GM12878 (cell line): ENCODE measurements at regions of chrX and their contacts with region 1.

Region 1: DNA sequence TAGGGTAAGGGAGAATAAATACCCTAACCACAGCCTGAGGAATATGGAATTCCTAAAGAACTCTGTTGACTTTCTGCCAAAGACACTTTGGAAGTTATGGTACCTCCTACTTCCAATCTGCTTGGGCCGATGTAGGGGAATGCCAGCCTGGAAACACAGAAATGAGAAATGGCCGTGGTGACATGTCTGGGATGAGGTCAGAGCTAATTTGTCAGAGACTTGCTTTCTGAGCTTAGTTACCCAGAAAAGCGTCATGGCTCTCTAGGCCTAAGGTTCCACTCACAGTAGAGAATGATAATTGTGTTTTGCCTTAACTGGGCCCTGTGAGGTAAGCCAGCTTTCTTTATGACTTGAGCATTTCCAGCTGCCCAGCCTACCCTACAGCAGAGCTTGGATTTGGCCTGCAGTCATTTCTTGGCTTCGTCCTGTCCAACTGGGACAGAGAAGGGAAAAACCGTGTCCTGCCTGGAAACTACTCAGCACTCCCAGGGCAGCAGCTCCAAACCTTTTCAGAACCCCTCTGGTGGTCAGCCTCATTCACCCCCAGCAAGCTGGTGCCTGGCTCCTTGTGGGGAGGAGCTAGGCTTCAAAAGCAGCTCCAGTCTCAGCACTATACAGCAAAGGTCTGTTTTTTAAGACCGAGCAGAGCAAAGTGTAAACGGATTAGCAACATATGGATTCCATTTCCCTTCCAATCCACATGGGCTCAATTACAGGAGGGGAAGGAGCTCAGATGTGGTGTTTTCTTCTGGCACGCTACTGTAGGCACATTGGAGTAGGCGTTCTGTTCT is 92.3 kb downstream of the RLIM start:
- DNase-seq: no peak
- ATAC-seq: no peak
- H3K4me3 ChIP-seq: no peak overlapping the region
- H3K27ac ChIP-seq: no peak overlapping the region
- H3K4me1 ChIP-seq: no peaks in the 10 kb centered on the region
- H3K27me3 ChIP-seq: no peaks in the 10 kb centered on the region
- CTCF ChIP-seq: no peak
- EP300 ChIP-seq: no peak
- POLR2A ChIP-seq: no peak
- RAD21 ChIP-seq: no peak

Region 2: GRCh38 chrX:74465424-74465823 is 56.7 kb before region 1 on chrX:
- CTCF ChIA-PET with region 1: no interaction called
- POLR2A ChIA-PET with region 1: no interaction called
- RAD21 ChIA-PET with region 1: no interaction called
- SMC1A ChIA-PET with region 1: no interaction called
- in situ Hi-C with region 1: loop called (anchors 10 kb)
- intact Hi-C with region 1: no loop called
- DNase-seq: no peak
- ATAC-seq: no peak
- H3K4me3 ChIP-seq: no peak overlapping the region
- H3K27ac ChIP-seq: no peak overlapping the region
- H3K4me1 ChIP-seq: no peaks in the 10 kb centered on the region
- H3K27me3 ChIP-seq: no peaks in the 10 kb centered on the region; a peak in 1 of 4 replicates
- CTCF ChIP-seq: no peak
- EP300 ChIP-seq: no peak
- POLR2A ChIP-seq: no peak
- RAD21 ChIP-seq: no peak